ENCODE measurements at regions of chr19 and their contacts with region 1.

Region 1: DNA sequence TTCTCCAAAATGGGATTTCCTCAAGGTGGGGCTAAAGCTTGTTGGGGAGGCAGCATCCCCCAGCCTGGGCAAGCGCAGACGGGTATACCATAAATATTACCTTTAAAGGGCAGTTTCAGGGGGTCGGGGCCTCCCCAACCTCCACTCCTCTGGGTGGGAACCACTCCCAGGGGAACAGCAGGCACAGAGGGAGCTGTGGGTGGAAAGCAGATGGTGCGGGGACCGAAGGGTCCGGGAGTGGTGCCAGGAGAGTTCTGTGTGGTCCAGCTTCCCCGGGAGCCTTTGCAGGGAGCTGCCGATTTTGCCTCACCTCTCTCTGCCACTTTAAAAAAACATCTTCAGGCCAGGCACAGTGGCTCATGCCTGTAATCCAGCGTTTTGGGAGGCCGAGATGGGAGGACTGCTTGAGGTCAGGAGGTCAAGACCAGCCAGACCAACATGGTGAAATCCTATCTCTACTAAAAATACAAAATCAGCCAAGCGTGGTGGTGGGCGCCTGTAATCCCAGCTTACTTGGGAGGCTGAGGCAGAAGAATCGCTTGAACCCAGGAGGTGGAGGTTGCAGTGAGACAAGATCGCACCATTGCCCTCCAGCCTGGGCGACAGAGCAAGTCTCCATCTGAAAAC is 5.5 kb downstream of the MAST3 start:
- DNase-seq: no peak
- H3K4me3 ChIP-seq: no peak overlapping the region
- H3K4me3 Mint-ChIP-seq: peak overlapping the region in 3 of 8 donors; percentile 10 to 69 (median 69)
- H3K27ac ChIP-seq: no peak overlapping the region
- H3K27ac Mint-ChIP-seq: peak overlapping the region in 1 of 7 donors; percentile 60
- H3K4me1 ChIP-seq: peaks cover 33% of the 10 kb centered on the region
- H3K4me1 Mint-ChIP-seq: peaks cover 17 to 32% (median 28%) of the 10 kb centered on the region in 4 donors
- H3K27me3 ChIP-seq: no peaks in the 10 kb centered on the region
- H3K27me3 Mint-ChIP-seq: no peaks in the 10 kb centered on the region

Region 2: GRCh38 chr19:18091217-18091608 is 11.8 kb before region 1 on chr19:
- CTCF ChIA-PET with region 1: interaction called, 11 read pairs
- POLR2A ChIA-PET with region 1: interaction called, 159 read pairs
- intact Hi-C with region 1: loop called (anchors 1 kb)
- DNase-seq: peak; percentile 81 to 91 (median 83)
- H3K4me3 ChIP-seq: peak overlapping the region in 1 of 2 donors; percentile 16
- H3K4me3 Mint-ChIP-seq: peak overlapping the region in 7 of 8 donors; percentile 68 to 83 (median 75)
- H3K27ac ChIP-seq: peak overlapping the region; percentile 85
- H3K27ac Mint-ChIP-seq: peak overlapping the region; percentile 98 to 100 (median 99)
- H3K4me1 ChIP-seq: peaks cover 68% of the 10 kb centered on the region
- H3K4me1 Mint-ChIP-seq: peaks cover 39 to 76% (median 55%) of the 10 kb centered on the region in 4 donors
- H3K27me3 ChIP-seq: no peaks in the 10 kb centered on the region
- H3K27me3 Mint-ChIP-seq: no peaks in the 10 kb centered on the region

Measured in CD4-positive, alpha-beta memory T cell (primary cell).